Mammary epithelial cell (primary cell): ENCODE measurements at regions of chrX and their contacts with region 1.

Region 1: DNA sequence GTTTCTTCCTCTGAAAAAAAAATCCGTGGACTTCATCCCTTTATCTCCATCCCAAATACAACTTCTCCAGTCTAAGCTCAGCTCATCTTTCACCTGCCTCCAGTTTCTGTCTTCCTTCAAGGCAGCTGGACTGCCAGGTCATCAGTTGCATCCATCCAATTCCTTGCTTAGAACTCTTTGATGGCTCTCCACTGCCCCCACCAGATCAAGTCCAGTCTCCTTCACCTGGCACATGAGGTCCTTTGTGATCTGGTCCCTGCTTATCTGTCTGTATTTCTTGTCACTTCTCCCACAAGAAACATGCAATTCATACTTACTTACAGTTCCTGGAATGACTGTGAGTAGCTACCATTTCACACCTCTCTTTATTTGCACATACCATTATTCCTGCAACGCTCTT is 33.8 kb downstream of the OTUD6A start:
- DNase-seq: peak; percentile 14
- H3K4me3 ChIP-seq: no peak overlapping the region
- H3K27ac ChIP-seq: no peak overlapping the region
- H3K4me1 ChIP-seq: no peaks in the 10 kb centered on the region
- H3K27me3 ChIP-seq: no peaks in the 10 kb centered on the region
- CTCF ChIP-seq: peak; percentile 21 to 49

Region 2: DNA sequence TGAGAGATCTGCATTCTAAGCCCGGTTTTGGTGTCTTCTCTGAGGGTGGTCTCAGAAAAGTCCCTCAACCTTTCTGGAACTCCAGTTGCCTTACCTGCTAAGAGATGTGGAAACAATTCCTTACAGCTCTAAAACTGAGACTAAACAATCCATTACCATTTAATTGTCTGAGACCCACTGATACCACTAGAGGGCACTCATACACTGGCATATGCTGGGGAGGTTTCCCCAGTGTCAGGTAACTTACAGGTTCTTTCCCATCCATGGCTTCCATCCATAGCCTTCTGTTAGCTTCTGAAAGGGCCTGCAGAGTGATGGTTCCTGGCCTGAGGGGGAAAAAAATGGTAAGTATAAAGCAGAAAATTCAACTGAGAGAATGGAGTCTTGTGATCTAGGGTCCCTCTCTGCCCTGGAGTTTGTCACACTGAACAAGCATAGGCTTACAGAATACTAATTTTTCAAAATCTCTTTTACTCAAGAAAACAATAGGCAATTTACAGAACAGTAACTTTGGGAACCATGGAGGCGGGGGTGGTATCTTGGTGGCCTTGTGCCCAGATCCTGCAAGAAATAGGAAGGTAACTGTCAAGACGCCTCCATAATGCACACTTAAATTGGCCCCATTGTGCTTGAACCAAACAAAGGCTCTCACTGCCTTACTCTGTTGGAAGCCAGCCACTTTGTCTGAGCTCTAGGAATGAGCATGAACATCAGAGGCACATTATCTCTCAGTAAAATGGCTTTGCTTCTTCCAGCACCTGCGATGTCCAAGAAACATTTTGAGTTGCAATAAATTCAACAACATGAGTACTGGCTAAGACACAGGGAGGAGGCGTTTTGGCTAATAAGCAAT is 1898.9 kb before region 1 on chrX:
- CTCF ChIA-PET with region 1: no interaction called
- dilution Hi-C with region 1: no loop called
- in situ Hi-C with region 1: no loop called
- intact Hi-C with region 1: loop called (anchors 5 kb)
- DNase-seq: peak; percentile 57
- H3K4me3 ChIP-seq: no peak overlapping the region
- H3K27ac ChIP-seq: no peak overlapping the region
- H3K4me1 ChIP-seq: no peaks in the 10 kb centered on the region
- H3K27me3 ChIP-seq: no peaks in the 10 kb centered on the region
- CTCF ChIP-seq: peak; percentile 76 to 86

Region 3: GRCh38 chrX:68822641-68823410 is 1273.2 kb before region 1 on chrX:
- CTCF ChIA-PET with region 1: no interaction called
- dilution Hi-C with region 1: no loop called
- in situ Hi-C with region 1: no loop called
- intact Hi-C with region 1: loop called (anchors 5 kb)
- DNase-seq: no peak
- H3K4me3 ChIP-seq: no peak overlapping the region
- H3K27ac ChIP-seq: no peak overlapping the region
- H3K4me1 ChIP-seq: peaks cover 4% of the 10 kb centered on the region
- H3K27me3 ChIP-seq: no peaks in the 10 kb centered on the region
- CTCF ChIP-seq: peak; percentile 71 to 72

Region 4: DNA sequence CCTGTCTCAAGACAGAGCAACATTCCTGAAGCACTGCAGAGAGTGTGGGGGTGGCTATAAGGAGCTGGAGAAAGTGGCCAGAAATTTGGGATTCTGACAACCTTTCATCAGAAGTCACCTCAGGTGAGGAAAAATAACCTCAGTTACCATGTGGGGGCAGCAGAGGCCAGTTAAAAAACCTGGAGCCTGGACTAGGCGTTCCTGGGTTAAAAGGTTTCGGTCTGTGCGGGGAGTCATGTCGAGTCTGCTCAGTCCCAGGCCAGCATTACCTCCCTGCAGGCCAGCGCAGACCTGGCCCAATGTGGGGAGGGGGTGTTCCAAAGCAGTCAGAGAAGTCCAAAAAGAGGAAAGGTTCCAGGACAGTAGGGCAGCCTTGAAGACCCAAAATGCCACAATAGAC is 602.9 kb before region 1 on chrX:
- CTCF ChIA-PET with region 1: no interaction called
- dilution Hi-C with region 1: no loop called
- in situ Hi-C with region 1: no loop called
- intact Hi-C with region 1: loop called (anchors 5 kb)
- DNase-seq: peak; percentile 20
- H3K4me3 ChIP-seq: no peak overlapping the region
- H3K27ac ChIP-seq: no peak overlapping the region
- H3K4me1 ChIP-seq: peaks cover 5% of the 10 kb centered on the region
- H3K27me3 ChIP-seq: no peaks in the 10 kb centered on the region
- CTCF ChIP-seq: peak; percentile 44 to 49

Region 5: GRCh38 chrX:69546417-69546816 is 549.6 kb before region 1 on chrX:
- CTCF ChIA-PET with region 1: no interaction called
- dilution Hi-C with region 1: no loop called
- in situ Hi-C with region 1: loop called (anchors 10 to 25 kb)
- intact Hi-C with region 1: no loop called
- DNase-seq: no peak
- H3K4me3 ChIP-seq: no peak overlapping the region
- H3K27ac ChIP-seq: no peak overlapping the region
- H3K4me1 ChIP-seq: no peaks in the 10 kb centered on the region
- H3K27me3 ChIP-seq: no peaks in the 10 kb centered on the region
- CTCF ChIP-seq: no peak

Region 6: GRCh38 chrX:69900491-69900890 is 195.6 kb before region 1 on chrX:
- CTCF ChIA-PET with region 1: no interaction called
- dilution Hi-C with region 1: no loop called
- in situ Hi-C with region 1: no loop called
- intact Hi-C with region 1: no loop called
- DNase-seq: no peak
- H3K4me3 ChIP-seq: no peak overlapping the region
- H3K27ac ChIP-seq: no peak overlapping the region
- H3K4me1 ChIP-seq: no peaks in the 10 kb centered on the region
- H3K27me3 ChIP-seq: no peaks in the 10 kb centered on the region
- CTCF ChIP-seq: no peak

Region 7: DNA sequence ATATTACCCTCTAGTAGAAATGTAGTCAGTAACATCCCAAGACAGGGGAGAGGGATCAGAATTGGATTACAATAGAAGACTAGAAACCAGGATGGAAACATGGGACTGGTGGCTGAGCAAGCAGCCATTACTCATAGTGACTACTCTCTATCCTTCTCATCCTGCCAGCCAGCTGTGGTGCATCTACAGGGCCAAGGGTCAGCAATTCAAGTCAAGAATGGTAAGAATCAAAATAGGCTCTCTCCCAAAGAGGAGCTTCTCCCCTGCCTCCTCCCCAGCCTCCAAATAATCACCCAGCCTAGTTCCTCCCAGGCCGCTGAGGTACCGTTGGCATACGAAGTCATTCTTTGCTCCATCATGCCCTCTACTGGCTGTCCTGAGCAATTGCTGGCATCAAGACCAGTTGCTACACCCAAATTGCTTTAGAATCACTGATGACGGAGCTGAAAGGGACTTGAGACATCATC is 65.7 kb before region 1 on chrX:
- CTCF ChIA-PET with region 1: no interaction called
- dilution Hi-C with region 1: loop called (anchors 10 kb)
- in situ Hi-C with region 1: no loop called
- intact Hi-C with region 1: loop called (anchors 5 kb)
- DNase-seq: peak; percentile 51
- H3K4me3 ChIP-seq: no peak overlapping the region
- H3K27ac ChIP-seq: no peak overlapping the region
- H3K4me1 ChIP-seq: peaks cover 13% of the 10 kb centered on the region
- H3K27me3 ChIP-seq: no peaks in the 10 kb centered on the region
- CTCF ChIP-seq: peak; percentile 81 to 88

Region 8: DNA sequence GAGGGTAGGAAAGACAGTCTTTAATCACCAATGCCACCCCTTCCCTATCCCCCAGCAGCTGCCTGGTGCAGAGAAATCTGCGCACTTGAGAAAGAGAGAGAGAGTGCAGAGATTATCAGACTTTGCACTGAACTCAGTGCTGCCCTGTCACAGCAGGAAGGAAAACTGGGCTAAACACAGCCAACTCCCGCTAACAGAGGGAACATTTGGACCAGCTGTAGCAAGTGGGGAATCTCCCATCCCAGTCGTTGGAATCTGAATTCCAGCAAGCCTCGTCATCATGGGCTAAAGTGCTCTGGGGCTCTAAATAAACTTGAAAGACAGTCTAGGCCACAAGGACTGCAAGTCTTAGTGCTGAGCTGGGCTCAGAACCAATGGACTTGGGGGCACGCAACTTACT is 517.2 kb after region 1 on chrX:
- CTCF ChIA-PET with region 1: no interaction called
- dilution Hi-C with region 1: no loop called
- in situ Hi-C with region 1: no loop called
- intact Hi-C with region 1: no loop called
- DNase-seq: peak; percentile 23
- H3K4me3 ChIP-seq: no peak overlapping the region
- H3K27ac ChIP-seq: no peak overlapping the region
- H3K4me1 ChIP-seq: no peaks in the 10 kb centered on the region
- H3K27me3 ChIP-seq: no peaks in the 10 kb centered on the region
- CTCF ChIP-seq: no peak